Spleen (tissue), 13 donors: ENCODE measurements at regions of chr5 and their contacts with region 1.

Region 1: GRCh38 chr5:179697993-179698934 is 503 bp upstream of the CANX start:
- DNase-seq: peak; percentile 100
- H3K4me3 ChIP-seq: peak overlapping the region; percentile 65 to 90 (median 82)
- H3K27ac ChIP-seq: peak overlapping the region; percentile 93 to 99 (median 98)
- H3K4me1 ChIP-seq: peaks cover 20 to 74% (median 55%) of the 10 kb centered on the region in 6 donors
- H3K27me3 ChIP-seq: no peaks in the 10 kb centered on the region
- CTCF ChIP-seq: peak in 5 of 11 experiments; percentile 16 to 50 (median 41)
- POLR2A ChIP-seq: peak in 2 of 3 donors; percentile 80 to 85

Region 2: GRCh38 chr5:179623003-179623880 is 75.0 kb before region 1 on chr5 and contains the start of gene HNRNPH1:
- intact Hi-C with region 1: loop called (anchors 5 kb)
- DNase-seq: peak; percentile 99
- H3K4me3 ChIP-seq: peak within 1 kb of the TSS; percentile 64 to 96 (median 84)
- H3K27ac ChIP-seq: peak within 1 kb of the TSS; percentile 98 to 100 (median 100)
- H3K4me1 ChIP-seq: peaks cover 46 to 57% (median 52%) of the 10 kb centered on the region in 6 donors
- H3K27me3 ChIP-seq: no peaks in the 10 kb centered on the region
- CTCF ChIP-seq: peak in 8 of 11 experiments; percentile 4 to 46 (median 16)
- POLR2A ChIP-seq: peak; percentile 98 to 99 (median 99)
- total RNA-seq, gene HNRNPH1: 653 to 931 (median 803) TPM